ENCODE measurements at regions of chr7 and their contacts with region 1.

Region 1: GRCh38 chr7:45021604-45022296 is 21.7 kb downstream of the CCM2 start:
- DNase-seq: no peak
- ATAC-seq: no peak
- H3K4me3 ChIP-seq: no peak overlapping the region
- H3K27ac ChIP-seq: no peak overlapping the region
- H3K4me1 ChIP-seq: no peaks in the 10 kb centered on the region
- H3K27me3 ChIP-seq: no peaks in the 10 kb centered on the region
- CTCF ChIP-seq: no peak

Region 2: GRCh38 chr7:44973610-44974401 is 47.9 kb before region 1 on chr7:
- CTCF ChIA-PET with region 1: no interaction called
- POLR2A ChIA-PET with region 1: interaction called, 11 read pairs
- intact Hi-C with region 1: no loop called
- DNase-seq: no peak
- ATAC-seq: no peak
- H3K4me3 ChIP-seq: no peak overlapping the region
- H3K27ac ChIP-seq: no peak overlapping the region
- H3K4me1 ChIP-seq: no peaks in the 10 kb centered on the region
- H3K27me3 ChIP-seq: no peaks in the 10 kb centered on the region
- CTCF ChIP-seq: peak; percentile 49